ENCODE measurements at regions of chr10 and their contacts with region 1.

Region 1: GRCh38 chr10:3785257-3785850 is 345 bp upstream of the KLF6 start:
- DNase-seq: peak; percentile 98
- ATAC-seq: peak; percentile 71
- H3K4me3 Mint-ChIP-seq: peak overlapping the region; percentile 91
- H3K27ac Mint-ChIP-seq: peak overlapping the region; percentile 98
- H3K4me1 Mint-ChIP-seq: peaks cover 33% of the 10 kb centered on the region
- H3K27me3 Mint-ChIP-seq: no peaks in the 10 kb centered on the region
- CTCF ChIP-seq: no peak

Region 2: GRCh38 chr10:3281941-3282673 is 503.2 kb before region 1 on chr10:
- CTCF ChIA-PET with region 1: no interaction called
- POLR2A ChIA-PET with region 1: no interaction called
- intact Hi-C with region 1: no loop called
- DNase-seq: no peak
- ATAC-seq: no peak
- H3K4me3 Mint-ChIP-seq: no peak overlapping the region
- H3K27ac Mint-ChIP-seq: no peak overlapping the region
- H3K4me1 Mint-ChIP-seq: no peaks in the 10 kb centered on the region
- H3K27me3 Mint-ChIP-seq: peaks cover 8% of the 10 kb centered on the region
- CTCF ChIP-seq: no peak

Region 3: DNA sequence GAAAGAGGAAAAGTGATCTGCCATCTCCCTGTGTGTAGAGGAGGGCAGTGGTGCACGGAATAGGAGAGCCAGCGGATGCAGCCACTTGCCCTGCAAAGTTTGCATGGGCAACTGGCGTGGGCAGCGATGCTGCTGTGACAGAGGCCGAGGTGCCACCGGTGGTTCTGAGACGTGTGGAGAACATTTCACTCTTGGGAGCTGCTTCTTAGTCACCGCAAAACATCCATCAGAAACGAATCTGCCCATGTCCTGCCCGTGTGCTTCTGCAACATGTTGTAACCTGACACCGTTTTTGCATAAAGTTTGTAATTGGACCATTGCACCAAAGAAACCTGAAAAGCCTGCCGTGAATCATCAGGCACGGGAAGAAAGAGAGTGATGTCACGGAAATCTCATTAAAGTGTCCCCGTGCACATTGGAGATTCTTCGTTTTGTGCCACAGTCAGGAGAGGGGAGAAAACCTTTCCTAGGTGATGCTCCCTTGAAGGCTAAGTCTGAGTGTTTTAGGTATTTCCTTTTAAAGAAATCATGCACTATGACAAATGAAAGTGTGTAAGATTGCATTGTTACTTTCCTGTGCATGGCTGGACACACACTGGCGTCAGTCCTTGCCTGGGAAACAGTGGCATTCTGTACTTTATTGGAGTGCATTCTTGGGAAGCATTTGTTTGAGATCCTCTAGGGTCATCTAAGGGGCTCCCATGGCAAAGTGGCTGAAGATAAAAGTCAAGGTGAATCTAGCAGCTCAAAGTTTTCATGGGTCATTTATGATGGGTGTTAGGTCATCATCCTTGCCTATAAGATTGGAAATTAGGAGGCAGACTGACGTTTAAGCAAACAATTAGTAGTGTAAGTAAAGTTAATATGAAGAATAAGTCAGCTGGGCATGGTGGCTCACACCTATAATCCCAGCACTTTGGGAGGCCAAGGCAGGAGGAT is 302.9 kb before region 1 on chr10:
- CTCF ChIA-PET with region 1: no interaction called
- POLR2A ChIA-PET with region 1: interaction called, 34 read pairs
- intact Hi-C with region 1: loop called (anchors 1 kb)
- DNase-seq: no peak
- ATAC-seq: no peak
- H3K4me3 Mint-ChIP-seq: peak overlapping the region; percentile 36
- H3K27ac Mint-ChIP-seq: peak overlapping the region; percentile 9
- H3K4me1 Mint-ChIP-seq: peaks cover 68% of the 10 kb centered on the region
- H3K27me3 Mint-ChIP-seq: no peaks in the 10 kb centered on the region
- CTCF ChIP-seq: no peak

Region 4: GRCh38 chr10:3763035-3763456 is 22.3 kb before region 1 on chr10:
- CTCF ChIA-PET with region 1: interaction called, 8 read pairs
- POLR2A ChIA-PET with region 1: interaction called, 191 read pairs
- intact Hi-C with region 1: loop called (anchors 1 kb)
- DNase-seq: no peak
- ATAC-seq: no peak
- H3K4me3 Mint-ChIP-seq: no peak overlapping the region
- H3K27ac Mint-ChIP-seq: peak overlapping the region; percentile 99
- H3K4me1 Mint-ChIP-seq: peaks cover 87% of the 10 kb centered on the region
- H3K27me3 Mint-ChIP-seq: no peaks in the 10 kb centered on the region
- CTCF ChIP-seq: no peak

Region 5: GRCh38 chr10:3852147-3852904 is 67.0 kb after region 1 on chr10:
- CTCF ChIA-PET with region 1: interaction called, 3 read pairs
- POLR2A ChIA-PET with region 1: interaction called, 120 read pairs
- intact Hi-C with region 1: loop called (anchors 1 kb)
- DNase-seq: no peak
- ATAC-seq: peak; percentile 80
- H3K4me3 Mint-ChIP-seq: peak overlapping the region; percentile 56
- H3K27ac Mint-ChIP-seq: peak overlapping the region; percentile 88
- H3K4me1 Mint-ChIP-seq: peaks cover 36% of the 10 kb centered on the region
- H3K27me3 Mint-ChIP-seq: no peaks in the 10 kb centered on the region
- CTCF ChIP-seq: no peak

Region 6: GRCh38 chr10:3935141-3935540 is 149.8 kb after region 1 on chr10:
- CTCF ChIA-PET with region 1: interaction called, 3 read pairs
- POLR2A ChIA-PET with region 1: interaction called, 27 read pairs
- intact Hi-C with region 1: loop called (anchors 1 kb)
- DNase-seq: peak; percentile 31
- ATAC-seq: peak; percentile 98
- H3K4me3 Mint-ChIP-seq: peak overlapping the region; percentile 67
- H3K27ac Mint-ChIP-seq: peak overlapping the region; percentile 88
- H3K4me1 Mint-ChIP-seq: peaks cover 31% of the 10 kb centered on the region
- H3K27me3 Mint-ChIP-seq: no peaks in the 10 kb centered on the region
- CTCF ChIP-seq: no peak

Region 7: GRCh38 chr10:4067531-4067930 is 282.2 kb after region 1 on chr10:
- CTCF ChIA-PET with region 1: interaction called, 3 read pairs
- POLR2A ChIA-PET with region 1: interaction called, 12 read pairs
- intact Hi-C with region 1: no loop called
- DNase-seq: no peak
- ATAC-seq: peak; percentile 86
- H3K4me3 Mint-ChIP-seq: no peak overlapping the region
- H3K27ac Mint-ChIP-seq: no peak overlapping the region
- H3K4me1 Mint-ChIP-seq: no peaks in the 10 kb centered on the region
- H3K27me3 Mint-ChIP-seq: no peaks in the 10 kb centered on the region
- CTCF ChIP-seq: no peak

Region 8: GRCh38 chr10:4656576-4657182 is 871.3 kb after region 1 on chr10:
- CTCF ChIA-PET with region 1: interaction called, 6 read pairs
- POLR2A ChIA-PET with region 1: interaction called, 12 read pairs
- intact Hi-C with region 1: loop called (anchors 1 kb)
- DNase-seq: no peak
- ATAC-seq: peak; percentile 52
- H3K4me3 Mint-ChIP-seq: no peak overlapping the region
- H3K27ac Mint-ChIP-seq: no peak overlapping the region
- H3K4me1 Mint-ChIP-seq: peaks cover 5% of the 10 kb centered on the region
- H3K27me3 Mint-ChIP-seq: peaks cover 2% of the 10 kb centered on the region
- CTCF ChIP-seq: no peak